Dorsolateral prefrontal cortex (tissue), 120 donors: ENCODE measurements at regions of chr4 and their contacts with region 1.

Region 1: GRCh38 chr4:74932816-74933561 is at the start of gene PARM1:
- DNase-seq: peak; percentile 55 to 95 (median 88)
- H3K4me3 ChIP-seq: peak within 1 kb of the TSS; percentile 57 to 86 (median 75)
- H3K27ac ChIP-seq: peak within 1 kb of the TSS in 50 of 59 donors; percentile 19 to 91 (median 70)
- H3K27me3 ChIP-seq: peaks cover 0 to 4% (median 0%) of the 10 kb centered on the region in 45 donors
- CTCF ChIP-seq: peak; percentile 37 to 89 (median 76)
- total RNA-seq, gene PARM1: 11.2 to 111 (median 56.5) TPM

Region 2: DNA sequence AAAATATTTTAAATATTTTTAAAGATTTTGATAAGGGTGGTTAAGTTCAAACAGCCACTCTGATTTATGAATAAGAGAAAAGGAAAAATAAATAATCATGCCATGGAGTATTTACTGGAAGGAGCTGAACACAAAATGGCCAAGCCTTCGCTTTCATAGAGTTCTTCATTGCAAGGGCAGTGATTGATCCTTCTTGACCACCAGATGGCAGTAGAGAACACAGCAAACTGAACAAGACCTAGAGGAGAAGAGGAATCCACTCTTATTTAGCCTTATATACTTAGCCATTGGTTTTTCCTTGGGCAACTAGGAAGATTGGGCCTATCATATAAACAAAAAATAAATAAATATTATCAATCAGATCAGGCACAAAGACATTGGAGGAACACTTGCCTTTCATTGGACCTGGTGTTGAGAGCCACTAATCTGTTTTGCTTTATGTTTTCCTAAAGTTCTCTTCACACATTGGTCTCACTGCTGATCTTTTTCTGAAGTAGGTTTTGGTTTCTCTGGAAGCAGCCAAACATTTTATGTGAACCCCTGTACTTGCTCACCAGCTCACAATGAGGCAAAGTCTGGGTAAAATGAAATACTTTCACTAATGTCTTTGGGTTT is 58.1 kb before region 1 on chr4:
- intact Hi-C with region 1: loop called in 1 of 2 experiments (anchors 2 kb)
- DNase-seq: peak in 4 of 10 donors; percentile 7 to 58 (median 29)
- H3K4me3 ChIP-seq: no peak overlapping the region
- H3K27ac ChIP-seq: peak overlapping the region in 3 of 59 donors; percentile 1 to 43 (median 42)
- H3K27me3 ChIP-seq: no peaks in the 10 kb centered on the region
- CTCF ChIP-seq: peak; percentile 85 to 99 (median 96)

Region 3: GRCh38 chr4:75142850-75143249 is 209.9 kb after region 1 on chr4:
- intact Hi-C with region 1: no loop called
- DNase-seq: no peak
- H3K4me3 ChIP-seq: no peak overlapping the region
- H3K27ac ChIP-seq: peak overlapping the region in 14 of 59 donors; percentile 10 to 61 (median 38)
- H3K27me3 ChIP-seq: no peaks in the 10 kb centered on the region
- CTCF ChIP-seq: no peak

Region 4: GRCh38 chr4:75477201-75477600 is 544.2 kb after region 1 on chr4:
- intact Hi-C with region 1: loop called (anchors 5 to 10 kb)
- DNase-seq: no peak
- H3K4me3 ChIP-seq: no peak overlapping the region
- H3K27ac ChIP-seq: no peak overlapping the region
- H3K27me3 ChIP-seq: no peaks in the 10 kb centered on the region
- CTCF ChIP-seq: no peak

Region 5: DNA sequence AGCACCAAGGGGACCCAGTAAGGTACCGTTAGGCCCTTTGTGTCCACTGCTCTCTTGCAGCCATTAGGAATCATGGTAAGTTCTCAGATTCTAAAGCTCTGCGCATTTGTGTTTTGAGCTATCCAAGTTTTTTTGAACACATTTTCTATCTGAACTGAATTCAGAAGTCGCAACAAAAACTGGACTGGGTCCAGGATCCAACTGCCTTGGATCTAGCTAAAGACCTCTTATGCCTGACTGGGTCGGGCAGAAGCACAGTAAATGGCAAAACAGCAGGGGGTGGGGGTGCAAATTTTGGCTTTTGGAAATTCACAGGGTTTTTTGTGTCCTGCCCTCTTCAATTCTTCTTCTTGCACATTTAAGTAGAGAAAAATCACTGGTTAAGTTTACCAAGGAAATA is 551.2 kb after region 1 on chr4:
- intact Hi-C with region 1: loop called (anchors 5 to 10 kb)
- DNase-seq: peak in 1 of 10 donors; percentile 51
- H3K4me3 ChIP-seq: no peak overlapping the region
- H3K27ac ChIP-seq: peak overlapping the region in 10 of 59 donors; percentile 2 to 53 (median 20)
- H3K27me3 ChIP-seq: no peaks in the 10 kb centered on the region
- CTCF ChIP-seq: no peak

Region 6: DNA sequence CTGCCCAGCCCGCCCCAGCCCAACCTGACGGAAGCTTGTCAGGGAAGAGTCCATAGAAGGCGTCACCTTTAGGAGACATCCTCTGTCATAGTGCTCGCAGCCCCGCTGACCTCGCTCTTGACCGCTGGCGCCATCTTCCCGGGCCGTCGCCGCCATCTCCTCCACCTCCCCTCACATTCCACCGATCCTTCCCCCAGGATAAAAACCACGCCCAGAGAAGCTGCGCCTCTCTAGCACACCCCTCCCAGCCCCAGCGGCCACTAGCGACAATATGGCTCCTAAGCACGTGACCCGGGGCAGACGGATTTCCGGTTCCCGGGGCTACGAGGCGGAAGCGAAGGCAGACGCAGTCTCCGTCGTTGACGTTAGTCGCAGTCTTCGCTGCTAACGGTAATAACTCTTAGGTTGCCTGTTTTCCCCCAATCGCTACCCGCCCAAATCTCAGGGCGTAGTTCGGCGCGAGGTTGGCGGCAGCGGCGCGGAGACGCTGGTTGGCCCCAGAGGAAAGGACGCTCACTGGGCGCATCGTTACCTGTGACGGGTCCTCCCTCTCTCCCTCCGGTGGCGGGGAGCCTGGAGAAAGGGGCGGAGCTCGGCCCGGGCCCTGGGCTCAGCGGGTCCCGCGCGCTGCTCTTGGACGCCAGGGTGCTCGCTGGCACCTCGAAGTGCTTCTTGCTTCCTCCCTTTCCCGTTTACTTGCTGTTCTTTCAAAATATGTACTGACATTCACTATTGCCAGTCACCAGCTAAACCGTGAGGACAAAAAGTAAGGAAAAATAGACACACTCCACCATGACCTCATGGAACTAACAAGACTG is 581.4 kb after region 1 on chr4 and contains the starts of genes RCHY1 and THAP6:
- intact Hi-C with region 1: loop called in 1 of 2 experiments (anchors 10 kb)
- DNase-seq: peak; percentile 92 to 98 (median 96)
- H3K4me3 ChIP-seq: peak within 1 kb of the TSS; percentile 65 to 98 (median 87)
- H3K27ac ChIP-seq: peak within 1 kb of the TSS; percentile 79 to 99 (median 95)
- H3K27me3 ChIP-seq: no peaks in the 10 kb centered on the region
- CTCF ChIP-seq: peak in 37 of 56 donors; percentile 5 to 64 (median 31)
- total RNA-seq, gene RCHY1: 20.6 to 68.6 (median 39.7) TPM
- total RNA-seq, gene THAP6: 12.4 to 45.4 (median 22.4) TPM